ENCODE measurements at regions of chr5 and their contacts with region 1.

Region 1: DNA sequence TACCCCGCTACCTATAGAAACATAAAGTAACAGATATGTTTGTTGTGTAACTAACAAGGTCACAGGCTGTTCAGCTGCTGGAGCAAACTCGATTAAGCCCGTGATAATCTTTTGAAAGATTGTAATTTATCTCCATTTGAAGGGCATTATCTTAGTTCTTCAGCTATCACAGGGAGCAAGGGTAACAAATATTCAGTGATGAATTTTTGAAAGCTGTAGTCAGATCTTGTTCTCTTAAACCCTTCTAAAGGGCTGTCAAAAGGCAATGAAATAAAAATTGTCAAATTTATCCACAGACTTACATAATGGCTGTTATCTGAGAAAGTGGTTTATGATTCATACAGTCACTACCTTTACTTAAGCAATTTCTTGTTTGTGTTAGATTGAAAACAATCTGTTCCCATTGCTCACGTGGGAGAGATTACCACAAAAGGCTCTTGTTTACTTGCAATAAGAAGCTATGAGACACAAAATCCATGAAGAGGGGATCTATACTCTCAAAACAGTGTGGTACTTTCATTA is 78.3 kb upstream of the ZNF608 start:
- DNase-seq: no peak
- ATAC-seq: no peak
- H3K4me3 ChIP-seq: no peak overlapping the region
- H3K4me3 Mint-ChIP-seq: no peak overlapping the region
- H3K27ac ChIP-seq: peak overlapping the region in 1 of 2 donors; percentile 56
- H3K27ac Mint-ChIP-seq: peak overlapping the region; percentile 51
- H3K4me1 ChIP-seq: peaks cover 16 to 19% of the 10 kb centered on the region in 2 donors
- H3K4me1 Mint-ChIP-seq: peaks cover 18% of the 10 kb centered on the region
- H3K27me3 ChIP-seq: no peaks in the 10 kb centered on the region
- H3K27me3 Mint-ChIP-seq: no peaks in the 10 kb centered on the region
- CTCF ChIP-seq: no peak

Region 2: DNA sequence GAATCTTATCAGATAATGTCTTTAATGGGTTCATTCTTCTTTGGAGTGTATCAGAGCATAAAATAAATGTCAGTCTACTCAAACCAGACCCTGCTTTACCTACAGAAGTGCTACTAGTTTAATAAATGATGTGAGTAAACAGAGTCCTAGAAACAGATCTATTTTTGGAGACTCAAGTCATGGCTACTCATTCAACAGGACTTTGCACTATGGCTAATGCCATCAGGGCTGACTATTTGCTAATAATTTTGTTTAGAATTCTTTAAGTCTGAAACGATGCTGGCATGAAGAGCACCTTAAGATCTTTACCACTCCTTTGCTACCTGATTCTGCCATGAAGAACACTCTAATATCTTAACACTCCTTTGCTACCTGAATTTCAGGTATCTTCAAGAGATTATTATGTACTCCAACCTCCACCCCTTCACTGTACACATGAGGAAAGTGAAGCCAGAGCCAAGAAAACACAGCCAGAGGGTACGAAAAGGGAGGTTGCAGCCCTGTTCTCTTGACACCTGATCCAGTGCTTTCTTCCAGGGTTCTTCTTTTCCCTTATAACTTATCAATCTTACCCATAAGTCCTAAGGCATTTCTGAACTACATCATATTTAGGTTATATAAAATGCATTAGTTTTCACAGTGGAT is 140.7 kb before region 1 on chr5:
- CTCF ChIA-PET with region 1: no interaction called
- POLR2A ChIA-PET with region 1: no interaction called
- intact Hi-C with region 1: no loop called
- DNase-seq: no peak
- ATAC-seq: no peak
- H3K4me3 ChIP-seq: no peak overlapping the region
- H3K4me3 Mint-ChIP-seq: no peak overlapping the region
- H3K27ac ChIP-seq: no peak overlapping the region
- H3K27ac Mint-ChIP-seq: no peak overlapping the region
- H3K4me1 ChIP-seq: peaks cover 16 to 19% of the 10 kb centered on the region in 2 donors
- H3K4me1 Mint-ChIP-seq: peaks cover 34% of the 10 kb centered on the region
- H3K27me3 ChIP-seq: no peaks in the 10 kb centered on the region
- H3K27me3 Mint-ChIP-seq: no peaks in the 10 kb centered on the region
- CTCF ChIP-seq: no peak

Region 3: DNA sequence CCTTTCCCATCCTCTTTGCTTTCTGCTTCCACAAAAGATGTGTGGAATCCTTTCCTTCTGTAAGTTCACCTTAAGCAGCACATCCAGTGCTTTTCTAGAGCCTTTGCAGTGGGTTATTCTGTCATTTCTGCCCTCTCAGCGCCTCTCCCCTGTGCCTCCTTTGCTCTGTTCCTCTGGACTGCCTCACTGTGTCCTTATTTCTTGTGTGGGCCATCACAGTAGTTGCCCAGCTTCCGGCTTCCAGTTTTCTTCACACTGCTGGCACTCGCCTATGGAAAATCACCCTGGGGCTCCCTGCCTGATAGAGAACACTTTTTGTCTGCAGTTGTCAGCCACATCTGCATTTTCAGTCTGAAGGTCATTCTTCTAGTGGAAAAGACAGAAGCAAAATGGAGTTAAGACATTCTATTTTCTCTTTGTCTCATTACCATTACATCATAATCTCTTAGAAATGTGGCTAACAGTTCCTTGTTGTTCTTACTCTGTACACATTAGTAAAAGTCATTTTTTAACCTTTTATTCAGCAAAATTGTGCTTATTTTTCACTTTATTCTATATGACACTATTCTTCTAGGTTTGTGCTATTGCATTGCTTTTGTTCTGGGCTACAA is 14.2 kb before region 1 on chr5:
- CTCF ChIA-PET with region 1: no interaction called
- POLR2A ChIA-PET with region 1: no interaction called
- intact Hi-C with region 1: loop called (anchors 2 kb)
- DNase-seq: no peak
- ATAC-seq: no peak
- H3K4me3 ChIP-seq: no peak overlapping the region
- H3K4me3 Mint-ChIP-seq: no peak overlapping the region
- H3K27ac ChIP-seq: no peak overlapping the region
- H3K27ac Mint-ChIP-seq: no peak overlapping the region
- H3K4me1 ChIP-seq: no peaks in the 10 kb centered on the region
- H3K4me1 Mint-ChIP-seq: no peaks in the 10 kb centered on the region
- H3K27me3 ChIP-seq: no peaks in the 10 kb centered on the region
- H3K27me3 Mint-ChIP-seq: no peaks in the 10 kb centered on the region
- CTCF ChIP-seq: no peak

Measured in B cell (primary cell).